ENCODE measurements at regions of chr5 and their contacts with region 1.

Region 1: DNA sequence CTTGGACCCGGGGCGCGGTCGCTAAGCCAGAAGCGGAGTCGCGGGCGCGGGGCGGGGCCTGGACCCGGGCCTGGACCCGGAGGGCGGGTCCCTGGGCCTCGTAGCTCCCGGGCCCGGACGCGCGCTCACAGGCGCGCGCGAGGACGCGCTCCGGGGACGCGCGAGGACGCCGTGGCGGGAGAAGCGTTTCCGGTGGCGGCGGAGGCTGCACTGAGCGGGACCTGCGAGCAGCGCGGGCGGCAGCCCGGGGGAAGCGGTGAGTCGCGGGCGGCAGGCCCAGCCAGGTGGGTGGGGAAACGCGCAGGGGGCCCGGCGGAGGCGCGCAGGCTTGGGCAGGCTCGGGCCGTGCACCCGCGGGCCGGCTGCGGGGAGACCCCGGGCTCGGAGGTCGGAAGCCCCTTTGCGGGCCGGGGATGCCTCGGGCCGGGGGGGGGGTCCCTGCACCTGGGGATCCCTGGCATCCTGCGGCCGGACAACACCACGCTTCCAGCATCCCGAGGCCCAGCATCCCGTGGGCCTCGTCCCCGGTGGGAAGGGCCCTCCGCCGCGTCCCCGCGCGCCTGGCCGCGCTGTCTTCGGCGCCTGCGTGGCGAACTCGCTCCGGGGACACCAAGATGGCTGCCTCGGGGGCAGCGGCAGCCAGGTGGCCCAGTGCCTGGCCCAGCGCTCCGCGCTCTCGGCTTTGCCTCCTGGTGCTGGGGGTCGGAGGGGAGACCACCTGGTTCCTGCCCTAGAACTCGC is at the start of gene SFXN1:
- DNase-seq: peak; percentile 94
- ATAC-seq: peak; percentile 75
- H3K4me3 Mint-ChIP-seq: peak within 1 kb of the TSS; percentile 92
- H3K27ac Mint-ChIP-seq: peak within 1 kb of the TSS; percentile 93
- H3K4me1 Mint-ChIP-seq: peaks cover 45% of the 10 kb centered on the region
- H3K27me3 Mint-ChIP-seq: peaks cover 15% of the 10 kb centered on the region
- total RNA-seq, gene SFXN1: 188 to 194 TPM

Region 2: DNA sequence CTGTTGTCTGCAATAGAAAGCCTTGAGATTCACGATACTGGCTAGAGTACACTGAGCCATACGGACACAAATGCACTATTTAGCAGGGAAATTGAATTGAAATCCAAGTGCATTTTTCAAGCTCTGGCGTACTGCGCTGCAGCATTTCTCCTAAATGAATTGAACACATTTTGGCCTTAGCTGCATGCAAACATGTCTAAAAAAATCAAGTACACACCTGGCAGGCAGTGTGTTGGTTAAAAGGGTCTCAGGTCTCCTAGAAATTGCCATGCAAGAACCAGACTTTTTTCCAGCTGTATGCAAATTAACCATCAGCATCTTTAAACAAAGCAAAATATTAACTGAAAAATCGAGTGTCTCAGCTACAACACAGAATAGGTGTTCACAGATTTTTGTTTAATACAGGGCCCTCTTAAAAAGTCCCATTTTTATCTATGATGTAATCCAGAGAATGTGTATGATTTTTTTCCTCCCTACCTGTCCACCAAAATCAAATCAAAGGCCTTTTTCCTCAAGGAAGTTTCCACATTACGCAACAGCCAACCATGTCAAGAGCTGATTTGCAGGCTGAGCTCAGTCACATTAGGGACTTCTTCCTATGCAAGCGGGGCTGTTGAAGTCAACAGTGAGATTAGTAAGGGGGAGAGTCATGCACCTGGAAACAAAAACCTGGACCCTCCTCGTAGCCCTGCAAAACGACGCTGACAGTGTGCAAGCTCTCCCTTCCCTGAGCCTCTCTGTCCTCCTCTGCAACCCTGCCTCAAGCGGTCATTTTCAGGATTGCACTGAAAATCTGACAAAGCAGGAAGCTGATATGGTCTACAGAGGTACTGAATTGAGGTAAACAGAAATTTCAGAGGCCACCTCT is 14.2 kb before region 1 on chr5:
- POLR2A ChIA-PET with region 1: interaction called, 14 read pairs
- DNase-seq: peak; percentile 56
- ATAC-seq: peak; percentile 99
- H3K4me3 Mint-ChIP-seq: no peak overlapping the region
- H3K27ac Mint-ChIP-seq: peak overlapping the region; percentile 64
- H3K4me1 Mint-ChIP-seq: peaks cover 8% of the 10 kb centered on the region
- H3K27me3 Mint-ChIP-seq: peaks cover 3% of the 10 kb centered on the region

Region 3: GRCh38 chr5:175517818-175518450 is 39.4 kb after region 1 on chr5:
- POLR2A ChIA-PET with region 1: interaction called, 19 read pairs
- DNase-seq: peak; percentile 47
- ATAC-seq: peak; percentile 25
- H3K4me3 Mint-ChIP-seq: peak overlapping the region; percentile 56
- H3K27ac Mint-ChIP-seq: peak overlapping the region; percentile 83
- H3K4me1 Mint-ChIP-seq: peaks cover 72% of the 10 kb centered on the region
- H3K27me3 Mint-ChIP-seq: no peaks in the 10 kb centered on the region

Measured in activated naive CD8-positive, alpha-beta T cell treated with anti-CD3 and anti-CD28 coated beads, Interleukin-2, amount 10 ng/mL, durations not matched to agents 7 days and 5 days (primary cell).